MCF 10A (cell line): ENCODE measurements at regions of chr5 and their contacts with region 1.

Region 1: DNA sequence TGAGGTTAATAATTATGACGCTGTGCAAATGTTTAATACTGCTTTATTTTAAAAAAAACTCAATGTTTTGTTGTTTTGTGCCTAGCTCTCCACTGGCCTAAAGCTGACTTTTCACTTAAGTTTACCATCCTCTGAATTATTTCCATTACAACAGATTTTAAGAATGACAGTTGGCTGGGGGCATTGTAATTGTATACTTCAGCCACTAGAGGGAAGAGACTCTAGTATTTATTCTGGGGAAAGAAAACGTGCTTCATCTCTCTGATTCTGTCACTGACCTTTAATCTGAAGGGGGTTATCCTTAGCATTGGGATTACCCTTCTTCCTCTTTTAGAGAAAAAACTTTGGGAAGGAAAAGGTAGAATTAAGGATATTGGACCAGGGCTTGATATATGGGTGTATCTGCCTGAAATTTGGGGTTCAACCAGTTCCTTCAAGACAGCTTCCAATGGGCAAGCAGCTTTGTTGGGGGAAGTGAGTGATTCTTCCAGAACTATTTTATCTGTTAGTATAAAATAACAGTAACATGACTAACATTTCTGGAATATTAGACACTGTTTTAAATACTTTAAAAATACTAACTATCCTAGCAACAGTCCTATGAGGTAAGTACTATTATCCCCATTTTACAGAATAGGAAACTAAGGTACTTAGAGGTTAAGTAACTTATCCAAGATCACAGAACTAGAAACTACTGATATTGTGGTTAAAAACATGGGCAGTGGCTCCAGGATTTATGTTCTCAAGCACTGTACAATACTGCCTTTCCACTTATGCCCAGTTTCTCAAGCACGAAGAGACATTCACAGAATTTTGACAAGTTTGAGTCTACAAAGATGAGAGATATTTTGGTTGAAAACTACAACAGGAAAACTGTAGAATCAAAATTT is 208.4 kb downstream of the CD180 start:
- DNase-seq: peak; percentile 48
- H3K4me3 Mint-ChIP-seq: no peak overlapping the region
- H3K27ac Mint-ChIP-seq: no peak overlapping the region
- H3K4me1 Mint-ChIP-seq: peaks cover 5% of the 10 kb centered on the region
- H3K27me3 Mint-ChIP-seq: no peaks in the 10 kb centered on the region
- CTCF ChIP-seq: peak; percentile 54

Region 2: GRCh38 chr5:66807743-66808142 is 180.5 kb before region 1 on chr5:
- CTCF ChIA-PET with region 1: interaction called, 3 read pairs
- POLR2A ChIA-PET with region 1: no interaction called
- intact Hi-C with region 1: loop called (anchors 5 kb)
- DNase-seq: peak; percentile 84
- H3K4me3 Mint-ChIP-seq: no peak overlapping the region
- H3K27ac Mint-ChIP-seq: no peak overlapping the region
- H3K4me1 Mint-ChIP-seq: peaks cover 8% of the 10 kb centered on the region
- H3K27me3 Mint-ChIP-seq: peaks cover 42% of the 10 kb centered on the region
- CTCF ChIP-seq: peak; percentile 56

Region 3: GRCh38 chr5:66967826-66968262 is 20.4 kb before region 1 on chr5:
- CTCF ChIA-PET with region 1: interaction called, 10 read pairs
- POLR2A ChIA-PET with region 1: interaction called, 4 read pairs
- intact Hi-C with region 1: no loop called
- DNase-seq: no peak
- H3K4me3 Mint-ChIP-seq: no peak overlapping the region
- H3K27ac Mint-ChIP-seq: no peak overlapping the region
- H3K4me1 Mint-ChIP-seq: no peaks in the 10 kb centered on the region
- H3K27me3 Mint-ChIP-seq: no peaks in the 10 kb centered on the region
- CTCF ChIP-seq: no peak

Region 4: DNA sequence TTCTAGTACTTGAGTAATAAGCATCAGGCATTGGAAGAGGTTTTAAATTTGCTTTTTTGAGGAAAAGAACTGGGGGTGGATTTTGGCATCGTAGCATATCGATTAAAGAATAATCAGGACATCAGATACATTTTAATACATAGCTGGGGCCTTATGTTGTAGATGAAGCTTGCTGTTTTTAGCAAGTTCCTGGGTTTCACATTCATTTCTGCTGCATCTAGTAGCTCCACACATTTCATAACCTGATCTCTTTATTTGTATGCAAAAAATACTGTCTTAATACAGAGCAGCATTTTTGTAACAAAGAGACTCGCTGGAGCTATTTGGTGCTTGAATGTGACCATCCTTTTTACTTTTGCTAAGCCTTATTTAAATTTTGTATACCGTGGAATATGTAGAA is 179.9 kb after region 1 on chr5:
- CTCF ChIA-PET with region 1: no interaction called
- POLR2A ChIA-PET with region 1: no interaction called
- intact Hi-C with region 1: no loop called
- DNase-seq: no peak
- H3K4me3 Mint-ChIP-seq: no peak overlapping the region
- H3K27ac Mint-ChIP-seq: no peak overlapping the region
- H3K4me1 Mint-ChIP-seq: no peaks in the 10 kb centered on the region
- H3K27me3 Mint-ChIP-seq: no peaks in the 10 kb centered on the region
- CTCF ChIP-seq: no peak